ENCODE measurements at regions of chr16 and their contacts with region 1.

Region 1: DNA sequence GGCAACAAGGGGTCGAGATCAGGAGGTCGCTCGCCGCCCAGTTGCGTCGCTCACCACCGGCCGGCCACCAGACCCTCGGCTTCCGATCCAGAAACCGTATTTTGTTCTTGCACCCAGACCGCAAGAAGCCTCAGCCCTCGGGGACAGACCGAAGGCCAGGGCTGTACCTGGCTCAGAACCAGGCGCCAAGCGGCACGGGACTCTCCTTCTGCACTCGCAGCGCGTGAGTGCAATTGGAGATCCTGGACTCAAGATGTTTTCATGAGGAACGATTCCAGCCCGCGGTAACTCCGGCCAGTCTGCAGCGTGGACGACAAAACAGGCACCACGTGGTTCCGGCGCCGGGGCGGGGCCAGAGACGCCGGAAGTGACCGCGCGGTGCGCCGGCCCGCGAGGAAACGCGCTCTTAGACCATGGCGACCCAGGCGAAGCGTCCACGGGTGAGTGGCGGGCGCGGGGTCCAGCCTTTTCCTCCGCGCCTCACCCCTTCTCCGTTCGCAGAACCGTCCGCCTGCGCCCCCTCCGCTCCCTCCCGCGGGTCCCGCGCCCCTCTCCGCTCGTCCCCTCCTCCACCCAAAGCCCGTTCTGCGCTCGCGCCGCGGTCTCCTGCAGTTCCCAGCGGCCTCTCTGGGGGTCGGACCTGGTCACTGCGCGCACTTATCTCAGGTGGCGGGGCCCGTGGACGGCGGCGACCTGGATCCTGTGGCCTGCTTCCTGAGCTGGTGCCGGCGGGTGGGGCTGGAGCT is at the start of gene SETD6:
- DNase-seq: peak; percentile 84 to 97 (median 92)
- H3K4me3 ChIP-seq: peak within 1 kb of the TSS; percentile 69 to 99 (median 91)
- H3K27ac ChIP-seq: peak within 1 kb of the TSS in 54 of 59 donors; percentile 1 to 83 (median 68)
- H3K27me3 ChIP-seq: no peaks in the 10 kb centered on the region
- CTCF ChIP-seq: peak in 41 of 56 donors; percentile 2 to 64 (median 31)
- total RNA-seq, gene SETD6: 14.5 to 47.1 (median 26.3) TPM

Region 2: DNA sequence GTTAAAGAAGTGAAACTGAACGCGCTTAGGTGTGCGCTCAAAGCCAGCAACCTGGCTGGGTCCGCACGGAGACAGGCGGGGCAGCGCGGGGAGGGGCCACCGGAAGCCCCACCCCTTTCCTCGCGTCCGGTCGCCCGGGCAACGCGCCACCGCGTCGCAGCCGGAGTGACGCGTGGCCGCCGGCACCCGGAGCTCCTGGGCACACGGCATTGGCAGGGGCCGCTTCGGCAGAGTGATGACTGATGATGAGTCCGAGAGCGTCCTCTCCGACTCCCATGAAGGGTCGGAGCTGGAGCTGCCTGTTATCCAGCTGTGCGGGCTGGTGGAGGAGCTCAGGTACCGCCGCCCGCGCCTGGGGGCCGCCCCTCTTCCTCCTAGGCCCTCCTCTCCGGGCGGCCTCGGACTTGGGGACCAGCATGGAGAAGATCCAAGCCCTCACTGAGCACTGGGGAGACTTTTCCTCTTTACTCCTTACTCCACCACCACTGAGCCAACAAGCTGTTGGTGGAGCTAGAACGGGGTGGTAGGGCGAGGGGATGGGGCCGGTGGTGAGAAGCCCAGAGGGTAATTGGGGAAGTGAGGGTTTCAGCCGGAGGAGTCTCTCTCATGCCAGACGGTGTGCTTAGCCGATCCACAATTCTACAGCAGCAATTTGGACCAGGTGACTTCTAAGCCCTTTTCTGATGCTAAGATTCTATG is 265.4 kb before region 1 on chr16:
- intact Hi-C with region 1: loop called in 1 of 2 experiments (anchors 10 kb)
- DNase-seq: peak; percentile 48 to 92 (median 76)
- H3K4me3 ChIP-seq: peak overlapping the region; percentile 53 to 97 (median 79)
- H3K27ac ChIP-seq: peak overlapping the region in 39 of 59 donors; percentile 2 to 76 (median 53)
- H3K27me3 ChIP-seq: peaks cover 0 to 3% (median 0%) of the 10 kb centered on the region in 45 donors
- CTCF ChIP-seq: peak in 13 of 56 donors; percentile 10 to 38 (median 27)

Region 3: DNA sequence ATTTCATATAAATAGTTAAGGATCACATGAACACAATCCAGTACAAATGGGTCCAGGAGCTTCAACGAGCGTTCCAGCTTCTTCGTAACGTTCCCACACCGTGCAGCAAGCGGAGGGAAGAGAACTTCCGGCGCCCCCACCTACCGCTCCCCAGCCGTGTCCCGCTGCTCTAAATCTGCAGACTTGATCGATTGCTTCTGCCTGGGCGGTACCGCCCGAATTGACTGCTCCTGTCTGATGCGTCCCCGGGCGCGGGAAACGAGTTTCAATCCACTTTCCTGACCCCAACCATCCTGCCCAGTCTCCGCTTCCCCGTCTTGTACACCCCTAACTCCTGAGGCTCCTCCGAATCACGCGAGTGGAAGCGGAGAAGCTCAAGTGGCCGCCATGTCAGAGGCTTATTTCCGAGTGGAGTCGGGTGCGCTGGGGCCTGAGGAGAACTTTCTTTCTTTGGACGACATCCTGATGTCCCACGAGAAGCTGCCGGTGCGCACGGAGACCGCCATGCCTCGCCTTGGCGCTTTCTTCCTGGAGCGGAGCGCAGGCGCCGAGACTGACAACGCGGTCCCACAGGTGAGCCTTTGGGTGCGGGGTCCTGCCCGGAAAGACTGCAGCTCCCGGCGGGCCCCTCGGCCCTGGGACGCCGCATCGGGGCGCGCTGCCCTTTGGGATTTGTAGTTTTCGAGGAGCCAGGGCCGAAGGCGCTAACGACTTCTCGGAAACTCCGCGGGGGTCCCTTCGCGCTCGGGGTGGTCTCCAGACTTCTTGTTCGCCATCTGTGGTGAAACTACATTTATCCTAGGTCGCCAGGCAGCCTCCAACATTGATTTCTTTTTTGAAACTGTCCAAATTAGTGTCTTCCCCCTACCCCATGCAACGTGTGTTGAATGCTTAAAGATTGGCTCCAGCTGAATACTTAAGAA is 122.8 kb before region 1 on chr16 and contains the start of gene GINS3:
- intact Hi-C with region 1: loop called in 1 of 2 experiments (anchors 5 kb)
- DNase-seq: peak; percentile 83 to 94 (median 92)
- H3K4me3 ChIP-seq: peak within 1 kb of the TSS; percentile 56 to 100 (median 91)
- H3K27ac ChIP-seq: peak within 1 kb of the TSS in 54 of 59 donors; percentile 1 to 87 (median 63)
- H3K27me3 ChIP-seq: no peaks in the 10 kb centered on the region
- CTCF ChIP-seq: peak in 22 of 56 donors; percentile 4 to 42 (median 19)
- total RNA-seq, gene GINS3: 1.6 to 9.8 (median 3.4) TPM

Region 4: DNA sequence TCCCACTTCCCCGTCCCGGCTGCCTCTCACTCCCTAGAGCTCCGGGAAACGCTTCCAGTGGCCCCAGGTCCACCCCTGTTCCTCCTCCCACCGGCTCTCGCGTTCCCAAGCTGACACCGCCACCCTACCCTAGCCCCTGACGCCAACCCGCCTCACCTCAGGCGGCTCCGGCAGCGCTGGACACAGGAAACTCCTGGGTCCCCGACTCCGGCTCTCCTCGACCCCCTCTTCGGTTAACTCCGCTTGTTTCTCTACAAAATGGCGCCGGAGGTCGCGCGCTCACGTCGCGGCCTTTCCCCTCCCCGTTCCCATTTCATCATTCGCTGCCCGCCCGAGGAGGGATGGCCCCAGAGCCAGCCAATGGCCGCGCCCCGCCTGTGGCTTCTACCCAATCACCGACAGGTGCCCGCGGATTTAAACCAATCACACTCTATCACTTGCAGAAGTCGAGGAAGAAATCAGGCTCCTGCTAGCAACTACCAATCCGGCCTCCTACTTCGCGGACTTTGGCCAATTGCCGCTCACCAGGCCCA is 114.3 kb after region 1 on chr16 and contains the start of gene CNOT1:
- intact Hi-C with region 1: loop called in 1 of 2 experiments (anchors 2 kb)
- DNase-seq: peak; percentile 95 to 99 (median 98)
- H3K4me3 ChIP-seq: peak within 1 kb of the TSS; percentile 68 to 100 (median 96)
- H3K27ac ChIP-seq: peak within 1 kb of the TSS; percentile 88 to 100 (median 98)
- H3K27me3 ChIP-seq: no peaks in the 10 kb centered on the region
- CTCF ChIP-seq: peak in 6 of 56 donors; percentile 4 to 17 (median 9)
- total RNA-seq, gene CNOT1: 71.0 to 135 (median 100) TPM

Region 5: GRCh38 chr16:58661199-58661830 is 146.0 kb after region 1 on chr16:
- intact Hi-C with region 1: loop called (anchors 2 to 10 kb)
- DNase-seq: peak in 5 of 10 donors; percentile 30 to 54 (median 39)
- H3K4me3 ChIP-seq: no peak overlapping the region
- H3K27ac ChIP-seq: no peak overlapping the region
- H3K27me3 ChIP-seq: no peaks in the 10 kb centered on the region
- CTCF ChIP-seq: peak in 54 of 56 donors; percentile 15 to 77 (median 60)

Region 6: GRCh38 chr16:58684354-58685083 is 169.2 kb after region 1 on chr16 and contains the start of gene SLC38A7:
- intact Hi-C with region 1: no loop called
- DNase-seq: peak; percentile 88 to 95 (median 92)
- H3K4me3 ChIP-seq: peak within 1 kb of the TSS; percentile 57 to 100 (median 93)
- H3K27ac ChIP-seq: peak within 1 kb of the TSS in 57 of 59 donors; percentile 7 to 94 (median 79)
- H3K27me3 ChIP-seq: no peaks in the 10 kb centered on the region
- CTCF ChIP-seq: peak in 23 of 56 donors; percentile 14 to 48 (median 24)
- total RNA-seq, gene SLC38A7: 17.4 to 52.1 (median 28.9) TPM

Region 7: GRCh38 chr16:58755989-58756649 is 240.8 kb after region 1 on chr16:
- intact Hi-C with region 1: loop called (anchors 10 kb)
- DNase-seq: peak; percentile 60 to 89 (median 82)
- H3K4me3 ChIP-seq: peak overlapping the region in 15 of 59 donors; percentile 4 to 34 (median 18)
- H3K27ac ChIP-seq: peak overlapping the region in 7 of 59 donors; percentile 4 to 59 (median 21)
- H3K27me3 ChIP-seq: no peaks in the 10 kb centered on the region
- CTCF ChIP-seq: peak in 54 of 56 donors; percentile 50 to 89 (median 74)

Measured in dorsolateral prefrontal cortex (tissue), 120 donors.